Right cardiac atrium (tissue), 5 donors: ENCODE measurements at regions of chr11 and their contacts with region 1.

Region 1: DNA sequence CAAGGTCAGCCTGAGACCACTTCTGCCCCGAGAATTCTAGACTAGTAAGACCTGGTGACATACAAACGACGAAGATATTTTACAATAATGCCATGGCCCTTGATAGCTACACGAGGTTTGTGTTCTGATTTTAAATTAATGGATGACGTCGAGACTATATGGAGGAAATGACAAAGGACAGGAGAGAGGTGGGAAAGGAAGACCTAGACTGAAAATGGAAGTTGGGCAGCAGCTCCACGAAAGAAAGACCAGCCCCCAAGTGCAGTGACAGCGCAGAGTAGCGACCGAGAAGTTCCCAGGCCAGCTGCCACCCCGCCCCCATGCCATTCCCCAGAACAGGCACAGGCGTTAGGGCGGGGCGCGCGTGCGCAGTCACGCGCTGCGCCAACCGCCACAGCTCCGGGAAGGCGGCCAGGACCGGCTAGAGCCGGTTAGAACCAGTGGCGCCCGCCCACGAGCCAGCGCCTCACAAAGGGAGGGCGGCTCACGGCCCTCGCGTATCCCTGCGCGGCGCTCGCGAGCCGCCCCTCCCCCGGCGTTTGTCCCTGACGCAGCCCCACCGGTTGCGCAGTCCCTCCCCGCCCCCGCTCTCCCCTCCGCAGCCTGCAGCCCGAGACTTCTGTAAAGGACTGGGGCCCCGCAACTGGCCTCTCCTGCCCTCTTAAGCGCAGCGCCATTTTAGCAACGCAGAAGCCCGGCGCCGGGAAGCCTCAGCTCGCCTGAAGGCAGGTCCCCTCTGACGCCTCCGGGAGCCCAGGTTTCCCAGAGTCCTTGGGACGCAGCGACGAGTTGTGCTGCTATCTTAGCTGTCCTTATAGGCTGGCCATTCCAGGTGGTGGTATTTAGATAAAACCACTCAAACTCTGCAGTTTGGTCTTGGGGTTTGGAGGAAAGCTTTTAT is 1.5 kb upstream of the MALAT1 start:
- DNase-seq: peak; percentile 99 to 100 (median 100)
- ATAC-seq: peak; percentile 91 to 94
- H3K4me3 ChIP-seq: peak overlapping the region; percentile 95
- H3K27ac ChIP-seq: peak overlapping the region; percentile 100
- H3K4me1 ChIP-seq: peaks cover 10% of the 10 kb centered on the region
- H3K27me3 ChIP-seq: no peaks in the 10 kb centered on the region

Region 2: GRCh38 chr11:65398362-65398910 is 99.0 kb before region 1 on chr11:
- intact Hi-C with region 1: no loop called
- DNase-seq: no peak
- ATAC-seq: no peak
- H3K4me3 ChIP-seq: no peak overlapping the region
- H3K27ac ChIP-seq: no peak overlapping the region
- H3K4me1 ChIP-seq: no peaks in the 10 kb centered on the region
- H3K27me3 ChIP-seq: no peaks in the 10 kb centered on the region

Region 3: GRCh38 chr11:65418711-65419459 is 78.5 kb before region 1 on chr11:
- intact Hi-C with region 1: loop called in 3 of 4 experiments (anchors 2 to 5 kb)
- DNase-seq: peak; percentile 99 to 100 (median 99)
- ATAC-seq: peak; percentile 63
- H3K4me3 ChIP-seq: peak overlapping the region; percentile 43
- H3K27ac ChIP-seq: peak overlapping the region; percentile 95
- H3K4me1 ChIP-seq: peaks cover 14% of the 10 kb centered on the region
- H3K27me3 ChIP-seq: no peaks in the 10 kb centered on the region

Region 4: GRCh38 chr11:65911682-65912568 is 414.5 kb after region 1 on chr11:
- intact Hi-C with region 1: no loop called
- DNase-seq: peak; percentile 68 to 80 (median 78)
- ATAC-seq: peak; percentile 35 to 56
- H3K4me3 ChIP-seq: no peak overlapping the region
- H3K27ac ChIP-seq: peak overlapping the region; percentile 3
- H3K4me1 ChIP-seq: peaks cover 18% of the 10 kb centered on the region
- H3K27me3 ChIP-seq: no peaks in the 10 kb centered on the region